Dorsolateral prefrontal cortex (tissue), 120 donors: ENCODE measurements at regions of chr1 and their contacts with region 1.

Region 1: DNA sequence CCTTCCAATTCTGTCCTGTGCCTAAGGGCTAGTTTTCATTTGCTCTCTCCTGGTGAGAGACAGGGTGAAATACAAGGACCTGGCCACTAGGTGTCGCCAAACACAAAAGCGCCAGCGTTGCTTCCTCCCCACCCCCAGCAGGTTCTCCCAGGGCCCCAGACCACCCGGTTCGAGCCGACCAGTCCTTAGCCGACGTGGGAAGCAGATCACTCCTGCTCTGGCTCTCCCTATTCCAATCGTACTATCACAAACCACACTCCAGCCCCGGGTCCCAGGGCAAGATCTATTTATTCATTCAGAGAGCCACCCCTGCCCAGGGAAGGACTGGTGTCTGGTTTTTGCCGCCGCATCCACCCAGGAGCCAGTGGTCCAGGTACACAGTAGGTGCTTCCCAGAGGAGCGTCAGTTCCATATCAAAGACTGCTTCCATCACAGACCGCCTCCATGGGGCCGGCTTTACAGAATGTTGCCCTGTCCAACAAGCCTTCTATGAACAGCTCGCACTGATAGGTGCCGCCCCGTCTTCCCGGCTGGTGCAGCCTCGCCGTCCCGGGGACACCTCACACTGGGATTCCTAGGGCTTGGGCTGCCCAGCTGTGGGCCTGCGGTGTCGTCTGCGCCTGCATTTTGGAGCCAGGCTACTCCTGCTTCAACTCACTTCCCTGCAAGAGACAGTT is 35.0 kb downstream of the CTNNBIP1 start:
- DNase-seq: peak in 9 of 10 donors; percentile 55 to 82 (median 74)
- H3K4me3 ChIP-seq: peak overlapping the region in 49 of 59 donors; percentile 0 to 54 (median 40)
- H3K27ac ChIP-seq: peak overlapping the region in 53 of 59 donors; percentile 17 to 88 (median 64)
- H3K27me3 ChIP-seq: no peaks in the 10 kb centered on the region
- CTCF ChIP-seq: peak; percentile 71 to 98 (median 94)

Region 2: DNA sequence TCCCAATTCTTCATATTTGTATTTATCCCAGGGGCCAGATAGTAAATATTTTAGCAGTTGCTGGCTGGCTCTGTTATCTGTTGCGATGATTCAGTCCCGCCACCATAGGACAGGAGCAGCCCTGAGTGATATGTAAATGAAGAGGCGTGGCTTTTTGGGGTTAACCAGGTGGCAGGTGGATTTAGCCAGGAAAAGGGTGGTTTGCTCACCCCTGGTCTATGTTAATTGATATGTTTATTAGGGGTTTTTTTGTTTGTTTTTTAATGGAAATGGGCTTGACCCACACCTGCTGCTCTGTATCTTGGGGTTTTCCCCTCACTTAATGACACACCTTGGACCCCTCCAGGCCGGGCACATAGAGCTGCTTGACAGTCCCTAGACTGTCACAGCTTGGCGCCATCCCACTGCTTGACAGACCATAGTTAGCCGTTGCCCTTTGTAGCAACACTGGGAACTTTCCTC is 160.8 kb before region 1 on chr1:
- intact Hi-C with region 1: no loop called
- DNase-seq: no peak
- H3K4me3 ChIP-seq: no peak overlapping the region
- H3K27ac ChIP-seq: no peak overlapping the region
- H3K27me3 ChIP-seq: no peaks in the 10 kb centered on the region
- CTCF ChIP-seq: no peak

Region 3: GRCh38 chr1:9724706-9725476 is 150.2 kb before region 1 on chr1:
- intact Hi-C with region 1: no loop called
- DNase-seq: peak in 4 of 10 donors; percentile 38 to 49 (median 41)
- H3K4me3 ChIP-seq: no peak overlapping the region
- H3K27ac ChIP-seq: peak overlapping the region in 6 of 59 donors; percentile 4 to 34 (median 16)
- H3K27me3 ChIP-seq: no peaks in the 10 kb centered on the region
- CTCF ChIP-seq: peak in 55 of 56 donors; percentile 41 to 88 (median 71)

Region 4: DNA sequence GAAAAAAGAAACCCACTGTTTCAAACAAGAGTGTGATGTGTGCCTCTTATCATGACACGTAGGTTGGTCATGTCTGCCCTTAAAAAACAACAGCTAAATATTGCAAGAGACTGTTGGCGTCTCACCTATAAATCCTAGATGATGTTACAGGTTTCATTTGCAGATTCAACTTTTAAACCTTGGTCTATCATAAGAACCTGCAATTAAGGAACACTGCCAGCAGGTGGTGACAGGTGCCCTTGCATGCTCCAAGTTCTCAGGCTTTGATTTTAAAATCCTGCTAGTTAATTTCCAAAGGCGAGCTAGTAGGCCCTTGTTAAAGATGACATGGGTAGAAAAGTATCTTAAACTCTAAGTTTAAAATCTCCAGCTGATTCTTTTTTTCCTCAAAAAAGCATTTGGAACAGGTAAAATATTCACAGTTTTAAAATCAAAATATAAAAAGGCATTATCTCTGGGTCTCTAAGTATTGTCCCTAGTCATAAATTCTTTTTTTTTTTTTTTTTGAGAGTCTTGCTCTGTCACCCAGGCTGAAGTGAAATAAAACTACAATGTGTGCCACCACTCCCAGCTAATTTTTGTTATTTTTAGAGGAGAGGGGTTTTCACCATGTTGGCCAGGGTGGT is 90.5 kb before region 1 on chr1:
- intact Hi-C with region 1: loop called in 1 of 2 experiments (anchors 5 kb)
- DNase-seq: no peak
- H3K4me3 ChIP-seq: no peak overlapping the region
- H3K27ac ChIP-seq: no peak overlapping the region
- H3K27me3 ChIP-seq: no peaks in the 10 kb centered on the region
- CTCF ChIP-seq: peak in 54 of 56 donors; percentile 38 to 72 (median 54)

Region 5: DNA sequence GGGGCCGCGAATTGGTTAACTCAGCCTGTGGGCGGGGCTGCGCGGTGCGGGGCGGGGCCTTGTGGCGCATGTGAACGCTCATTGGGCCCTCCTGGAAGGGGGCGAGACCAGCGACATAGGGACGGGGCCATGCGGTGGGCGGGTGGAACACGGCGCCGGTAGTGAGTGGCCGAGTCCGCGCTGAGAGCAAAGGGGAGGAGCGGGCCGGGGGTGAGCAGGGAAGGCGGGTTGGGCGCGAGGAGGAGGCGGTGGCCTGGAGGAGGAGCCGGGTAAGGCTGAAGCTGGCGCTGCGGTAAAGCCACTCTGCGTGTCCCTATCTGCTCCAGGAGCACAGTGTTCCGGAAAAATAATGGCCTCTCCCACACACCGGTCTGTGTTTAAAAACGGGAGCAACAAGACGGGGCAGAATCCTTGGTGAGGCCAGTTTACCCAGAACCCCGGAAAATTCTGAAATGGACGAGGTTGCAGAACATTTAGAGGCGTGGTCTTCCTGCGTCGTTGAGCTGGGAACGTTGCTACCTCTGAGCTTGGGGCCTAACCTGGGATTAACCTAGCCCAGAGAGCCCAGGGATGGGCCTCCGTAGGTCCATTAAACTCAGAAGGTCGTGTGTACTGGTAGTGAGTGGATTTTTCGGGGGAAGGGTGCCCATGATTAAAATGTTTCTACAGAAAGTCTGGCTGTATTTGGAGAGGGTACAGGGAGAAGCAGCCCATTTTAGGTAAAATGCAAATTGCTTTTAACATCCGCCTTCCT is 35.5 kb after region 1 on chr1:
- intact Hi-C with region 1: loop called (anchors 2 to 5 kb)
- DNase-seq: peak; percentile 99 to 100 (median 100)
- H3K4me3 ChIP-seq: peak overlapping the region; percentile 43 to 91 (median 71)
- H3K27ac ChIP-seq: peak overlapping the region; percentile 67 to 98 (median 94)
- H3K27me3 ChIP-seq: no peaks in the 10 kb centered on the region
- CTCF ChIP-seq: peak in 29 of 56 donors; percentile 3 to 51 (median 23)

Region 6: DNA sequence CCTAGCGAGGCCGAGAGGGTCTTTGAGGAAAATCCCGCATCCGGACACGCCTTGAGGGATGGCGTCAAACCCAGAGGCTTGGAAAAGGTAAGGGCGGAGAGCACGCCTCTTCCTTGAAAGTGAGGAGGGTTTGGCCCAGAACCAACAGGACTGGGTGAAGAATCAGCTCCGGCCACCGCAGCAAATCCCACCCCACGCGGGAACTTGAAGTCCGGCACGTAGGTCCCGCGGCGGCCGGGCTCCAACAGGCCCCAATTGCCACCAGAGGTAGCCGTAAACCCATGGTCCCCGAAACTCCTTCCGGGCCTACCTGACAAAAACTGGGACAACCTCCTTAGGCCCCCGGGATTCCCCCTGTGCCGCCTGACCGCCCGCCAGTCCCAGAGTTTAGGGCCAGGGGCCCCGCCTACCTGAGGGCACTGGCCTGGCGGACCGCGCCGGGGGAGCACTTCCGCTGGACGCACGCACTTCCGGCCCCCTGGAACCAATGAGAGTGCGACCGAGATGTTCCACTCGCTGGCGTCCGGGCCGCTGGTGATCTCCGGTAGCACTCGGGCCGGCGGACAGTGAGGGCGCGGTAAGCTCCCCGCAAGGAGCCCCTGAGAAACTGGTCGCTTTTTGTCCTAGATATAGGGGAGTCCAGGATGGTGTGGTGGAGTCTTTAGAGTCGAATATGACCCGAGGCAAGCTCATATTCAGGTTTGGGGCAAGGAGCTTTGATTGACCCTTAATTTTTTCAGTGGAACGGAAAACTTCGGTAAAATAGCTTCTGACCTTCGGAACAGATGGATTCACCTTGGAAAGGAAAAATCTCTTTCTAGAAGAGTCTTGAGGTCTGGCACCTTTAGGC is 68.1 kb after region 1 on chr1 and contains the starts of genes LZIC and NMNAT1:
- intact Hi-C with region 1: loop called (anchors 2 to 5 kb)
- DNase-seq: peak; percentile 90 to 95 (median 94)
- H3K4me3 ChIP-seq: peak within 1 kb of the TSS; percentile 70 to 99 (median 92)
- H3K27ac ChIP-seq: peak within 1 kb of the TSS; percentile 52 to 96 (median 85)
- H3K27me3 ChIP-seq: no peaks in the 10 kb centered on the region
- CTCF ChIP-seq: peak in 48 of 56 donors; percentile 2 to 68 (median 40)
- total RNA-seq, gene LZIC: 21.5 to 45.4 (median 31.9) TPM
- total RNA-seq, gene NMNAT1: 6.4 to 18.0 (median 10.1) TPM

Region 7: GRCh38 chr1:10152709-10153284 is 277.7 kb after region 1 on chr1:
- intact Hi-C with region 1: loop called in 1 of 2 experiments (anchors 5 kb)
- DNase-seq: peak; percentile 58 to 89 (median 72)
- H3K4me3 ChIP-seq: no peak overlapping the region
- H3K27ac ChIP-seq: peak overlapping the region; percentile 34 to 92 (median 80)
- H3K27me3 ChIP-seq: no peaks in the 10 kb centered on the region
- CTCF ChIP-seq: peak in 55 of 56 donors; percentile 38 to 87 (median 72)

Region 8: GRCh38 chr1:10161541-10162290 is 286.6 kb after region 1 on chr1:
- intact Hi-C with region 1: loop called in 1 of 2 experiments (anchors 10 kb)
- DNase-seq: peak in 2 of 10 donors; percentile 26 to 64
- H3K4me3 ChIP-seq: peak overlapping the region in 1 of 59 donors; percentile 21
- H3K27ac ChIP-seq: peak overlapping the region; percentile 43 to 97 (median 86)
- H3K27me3 ChIP-seq: no peaks in the 10 kb centered on the region
- CTCF ChIP-seq: peak in 1 of 56 donors; percentile 9

Region 9: GRCh38 chr1:10338047-10338446 is 462.9 kb after region 1 on chr1:
- intact Hi-C with region 1: loop called in 1 of 2 experiments (anchors 10 kb)
- DNase-seq: peak; percentile 41 to 79 (median 64)
- H3K4me3 ChIP-seq: no peak overlapping the region
- H3K27ac ChIP-seq: peak overlapping the region in 58 of 59 donors; percentile 14 to 98 (median 92)
- H3K27me3 ChIP-seq: no peaks in the 10 kb centered on the region
- CTCF ChIP-seq: peak; percentile 24 to 89 (median 75)